ENCODE measurements at regions of chr1 and their contacts with region 1.

Region 1: GRCh38 chr1:31789259-31790065 is 25.3 kb upstream of the ADGRB2 start:
- DNase-seq: peak; percentile 98
- ATAC-seq: peak; percentile 91
- H3K4me3 Mint-ChIP-seq: peak overlapping the region; percentile 78
- H3K27ac Mint-ChIP-seq: no peak overlapping the region
- H3K4me1 Mint-ChIP-seq: peaks cover 5% of the 10 kb centered on the region
- H3K27me3 Mint-ChIP-seq: no peaks in the 10 kb centered on the region
- CTCF ChIP-seq: peak; percentile 65

Region 2: DNA sequence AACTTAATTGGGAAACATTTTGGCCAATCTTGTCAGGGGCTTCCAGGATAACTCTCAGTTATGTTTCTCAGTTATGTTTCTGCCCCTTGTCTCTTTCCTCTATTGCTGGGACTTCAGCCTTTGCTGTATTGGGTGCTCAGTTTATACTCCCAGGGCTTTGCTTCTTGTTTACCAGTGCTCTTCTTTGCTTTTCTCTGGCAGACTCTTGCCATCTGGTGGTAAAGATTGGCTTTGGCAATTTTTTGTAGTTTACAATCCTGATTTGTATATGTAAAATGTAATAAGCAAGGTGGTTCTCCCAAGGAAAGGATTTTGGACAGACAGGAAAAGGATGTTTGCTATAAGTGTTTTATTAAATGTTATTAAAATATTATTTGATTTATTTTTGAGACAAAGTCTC is 454.5 kb before region 1 on chr1:
- CTCF ChIA-PET with region 1: no interaction called
- POLR2A ChIA-PET with region 1: no interaction called
- intact Hi-C with region 1: no loop called
- DNase-seq: no peak
- ATAC-seq: no peak
- H3K4me3 Mint-ChIP-seq: no peak overlapping the region
- H3K27ac Mint-ChIP-seq: no peak overlapping the region
- H3K4me1 Mint-ChIP-seq: peaks cover 2% of the 10 kb centered on the region
- H3K27me3 Mint-ChIP-seq: no peaks in the 10 kb centered on the region
- CTCF ChIP-seq: peak; percentile 57

Region 3: GRCh38 chr1:31564134-31564989 is 225.1 kb before region 1 on chr1:
- CTCF ChIA-PET with region 1: interaction called, 16 read pairs
- POLR2A ChIA-PET with region 1: no interaction called
- intact Hi-C with region 1: loop called (anchors 5 kb)
- DNase-seq: peak; percentile 66
- ATAC-seq: peak; percentile 90
- H3K4me3 Mint-ChIP-seq: no peak overlapping the region
- H3K27ac Mint-ChIP-seq: no peak overlapping the region
- H3K4me1 Mint-ChIP-seq: no peaks in the 10 kb centered on the region
- H3K27me3 Mint-ChIP-seq: peaks cover 6% of the 10 kb centered on the region
- CTCF ChIP-seq: peak; percentile 79

Region 4: DNA sequence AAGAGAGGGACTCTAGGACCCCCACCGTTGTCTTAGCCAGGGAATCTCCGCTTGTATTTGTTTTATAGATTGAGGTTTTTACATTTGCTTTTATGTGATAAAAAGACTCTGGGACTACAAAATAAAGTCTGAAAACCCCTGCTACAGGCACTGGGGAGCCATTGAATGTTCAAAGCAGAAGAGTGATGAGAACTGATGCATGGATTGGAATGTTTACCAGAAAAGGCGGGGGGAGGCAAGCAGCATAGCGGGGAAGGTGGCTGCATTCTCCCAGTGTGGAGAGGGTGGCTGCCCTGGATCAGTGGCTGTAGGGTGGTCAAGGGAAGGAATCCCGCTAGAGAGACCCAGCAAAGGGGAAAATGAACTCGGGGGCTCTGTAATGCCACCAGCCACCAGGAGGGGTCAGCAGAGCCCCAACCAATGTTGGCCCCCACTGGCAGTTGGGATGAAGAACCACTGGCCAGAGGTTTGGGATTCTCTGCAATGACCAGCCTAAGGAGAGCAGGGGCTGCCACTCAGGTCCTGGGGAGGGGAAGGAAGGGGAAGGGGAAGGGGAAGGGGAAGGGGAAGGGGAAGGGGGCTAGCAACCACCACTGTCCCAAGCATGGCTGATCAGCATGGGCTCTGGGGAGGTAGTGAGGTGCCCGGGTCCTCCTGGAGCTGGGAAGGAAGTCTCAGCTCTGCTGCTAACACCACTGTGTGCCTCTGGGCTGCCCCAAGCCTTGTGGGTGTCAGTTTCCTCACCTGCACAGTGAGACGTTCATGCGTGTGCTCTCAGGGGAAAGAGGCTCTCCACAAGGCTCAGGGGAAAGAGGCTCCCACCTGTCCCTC is 125.6 kb before region 1 on chr1:
- CTCF ChIA-PET with region 1: interaction called, 50 read pairs
- POLR2A ChIA-PET with region 1: interaction called, 10 read pairs
- intact Hi-C with region 1: loop called (anchors 5 kb)
- DNase-seq: peak; percentile 64
- ATAC-seq: peak; percentile 84
- H3K4me3 Mint-ChIP-seq: no peak overlapping the region
- H3K27ac Mint-ChIP-seq: no peak overlapping the region
- H3K4me1 Mint-ChIP-seq: no peaks in the 10 kb centered on the region
- H3K27me3 Mint-ChIP-seq: peaks cover 2% of the 10 kb centered on the region
- CTCF ChIP-seq: peak; percentile 81

Region 5: DNA sequence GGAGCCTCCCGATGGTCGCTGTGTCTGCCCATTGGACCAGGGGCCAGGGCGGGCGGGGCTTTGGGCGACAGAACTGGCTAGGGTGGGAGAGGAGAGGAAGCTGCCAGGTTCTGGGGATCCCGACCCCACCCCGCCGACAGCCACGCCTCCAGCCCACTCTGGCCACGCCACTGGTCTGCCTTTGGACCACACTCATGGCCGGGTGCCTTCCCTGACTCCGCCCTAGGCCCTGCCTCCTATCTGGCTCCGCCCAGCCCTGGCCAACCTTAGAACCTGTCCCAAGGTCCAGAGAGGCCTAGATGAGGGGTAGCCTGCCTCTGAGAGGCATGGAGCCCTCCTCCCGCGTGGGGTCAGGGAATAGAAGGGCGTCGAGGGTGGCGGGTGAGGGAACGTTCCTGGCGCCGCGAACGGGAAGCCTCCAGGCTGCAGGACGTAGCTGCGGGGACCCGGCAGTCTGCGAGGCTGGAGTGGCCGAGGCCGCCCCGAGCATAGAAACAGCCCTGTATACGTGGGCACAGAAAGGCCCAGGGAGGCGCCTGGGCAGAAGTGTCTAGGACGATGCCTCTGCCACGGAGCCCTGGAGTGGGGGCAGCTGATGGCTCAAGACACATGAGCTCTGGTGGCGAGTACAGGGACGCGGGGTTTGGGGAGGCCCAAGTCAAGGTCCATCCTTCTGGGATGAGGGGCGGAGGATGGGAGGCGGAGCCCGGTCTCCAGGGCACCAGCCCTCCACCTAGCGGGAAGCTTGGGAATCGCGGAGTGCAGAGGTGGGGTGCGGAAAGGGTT is 74.2 kb before region 1 on chr1:
- CTCF ChIA-PET with region 1: interaction called, 19 read pairs
- POLR2A ChIA-PET with region 1: no interaction called
- intact Hi-C with region 1: loop called (anchors 10 kb)
- DNase-seq: peak; percentile 50
- ATAC-seq: peak; percentile 75
- H3K4me3 Mint-ChIP-seq: peak overlapping the region; percentile 31
- H3K27ac Mint-ChIP-seq: no peak overlapping the region
- H3K4me1 Mint-ChIP-seq: peaks cover 12% of the 10 kb centered on the region
- H3K27me3 Mint-ChIP-seq: peaks cover 47% of the 10 kb centered on the region
- CTCF ChIP-seq: peak; percentile 63

Region 6: GRCh38 chr1:31745096-31745945 is 44.1 kb before region 1 on chr1:
- CTCF ChIA-PET with region 1: interaction called, 22 read pairs
- POLR2A ChIA-PET with region 1: no interaction called
- intact Hi-C with region 1: no loop called
- DNase-seq: peak; percentile 82
- ATAC-seq: peak; percentile 92
- H3K4me3 Mint-ChIP-seq: no peak overlapping the region
- H3K27ac Mint-ChIP-seq: no peak overlapping the region
- H3K4me1 Mint-ChIP-seq: peaks cover 11% of the 10 kb centered on the region
- H3K27me3 Mint-ChIP-seq: peaks cover 2% of the 10 kb centered on the region
- CTCF ChIP-seq: peak; percentile 75

Region 7: DNA sequence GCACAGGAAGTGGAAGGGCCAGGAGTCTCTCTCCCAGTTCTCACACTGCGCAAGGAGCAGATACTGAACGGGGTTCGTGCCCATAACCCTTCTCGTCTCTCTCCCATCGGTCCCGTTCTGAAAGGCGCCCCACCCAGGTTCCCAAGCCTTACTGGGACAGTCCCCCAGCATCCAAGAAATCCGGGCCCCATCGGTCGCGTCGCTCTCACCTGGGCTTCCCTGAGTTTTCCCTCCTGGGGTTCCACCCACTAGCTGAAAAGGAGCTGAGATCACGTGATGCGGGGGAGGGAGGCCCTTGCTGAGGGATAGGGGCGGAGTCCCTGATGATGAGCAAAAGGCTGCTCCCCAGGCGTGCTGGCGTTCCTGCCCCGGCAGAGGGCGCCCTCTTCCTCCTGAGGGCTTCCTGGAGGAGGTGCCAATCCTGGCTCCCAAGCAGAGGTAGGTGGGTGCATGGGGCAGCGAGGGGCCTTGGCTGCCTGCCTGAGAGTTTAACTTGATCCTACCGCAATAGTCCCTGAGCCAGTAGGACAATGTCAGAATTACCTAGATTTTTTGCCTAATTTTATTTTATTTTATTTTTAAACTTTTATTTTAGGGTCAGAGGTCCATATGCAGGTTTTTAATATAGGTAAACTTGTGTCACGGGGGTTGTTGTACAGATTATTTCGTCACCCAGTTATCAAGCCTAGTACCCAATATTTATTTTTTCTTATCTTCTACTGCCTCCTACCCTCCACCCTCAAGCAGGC is 26.5 kb after region 1 on chr1 and contains the start of gene SPOCD1:
- CTCF ChIA-PET with region 1: interaction called, 14 read pairs
- POLR2A ChIA-PET with region 1: no interaction called
- intact Hi-C with region 1: no loop called
- DNase-seq: peak; percentile 89
- ATAC-seq: peak; percentile 93
- H3K4me3 Mint-ChIP-seq: no peak within 1 kb of the TSS
- H3K27ac Mint-ChIP-seq: no peak within 1 kb of the TSS
- H3K4me1 Mint-ChIP-seq: peaks cover 13% of the 10 kb centered on the region
- H3K27me3 Mint-ChIP-seq: no peaks in the 10 kb centered on the region
- CTCF ChIP-seq: peak; percentile 96
- total RNA-seq, gene SPOCD1: not detected

Measured in activated CD8-positive, alpha-beta T cell treated with anti-CD3 and anti-CD28 coated beads for 36 hours (primary cell).